ENCODE measurements at regions of chr9 and their contacts with region 1.

Region 1: GRCh38 chr9:101530077-101530711 is 3.5 kb upstream of the RNF20 start:
- DNase-seq: peak; percentile 83
- ATAC-seq: peak; percentile 49
- H3K4me3 ChIP-seq: no peak overlapping the region
- H3K27ac ChIP-seq: no peak overlapping the region
- H3K4me1 ChIP-seq: 0 out of 2 replicates have a peak, but pooled peaks cover 3% of the 10 kb centered on the region
- H3K27me3 ChIP-seq: no peaks in the 10 kb centered on the region
- CTCF ChIP-seq: peak; percentile 74

Region 2: DNA sequence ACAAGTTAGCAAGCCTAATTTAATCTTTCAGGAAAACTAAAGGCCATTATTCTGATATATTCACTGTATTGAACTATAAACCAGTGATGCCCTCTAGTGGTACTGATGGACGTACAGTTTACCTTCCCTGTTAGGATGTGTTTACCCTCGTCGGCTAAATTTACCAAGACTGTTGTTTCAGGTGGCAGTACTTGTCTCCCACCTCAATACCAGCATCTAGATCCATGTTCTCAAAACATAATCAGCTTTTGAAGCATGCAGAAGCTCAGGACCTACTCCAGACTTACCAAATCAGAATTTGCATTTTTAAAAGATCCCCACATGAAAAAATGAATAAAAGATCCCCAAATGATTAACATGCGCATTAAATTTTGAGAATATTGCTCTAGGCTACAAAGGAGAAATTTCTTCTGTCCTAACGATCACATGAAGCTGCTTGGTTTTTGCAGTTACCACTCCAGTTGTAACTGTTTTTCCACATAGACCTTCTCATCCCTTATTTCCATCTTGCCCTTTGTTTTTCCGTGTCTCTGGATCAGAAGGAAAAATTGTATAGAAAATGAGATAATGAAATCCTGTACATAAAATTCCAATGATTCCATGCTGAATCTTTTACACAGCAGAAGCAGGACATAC is 142.2 kb before region 1 on chr9:
- CTCF ChIA-PET with region 1: no interaction called
- POLR2A ChIA-PET with region 1: no interaction called
- intact Hi-C with region 1: loop called (anchors 1 kb)
- DNase-seq: peak; percentile 51
- ATAC-seq: no peak; the same call in 1 of the 2 replicates
- H3K4me3 ChIP-seq: no peak overlapping the region
- H3K27ac ChIP-seq: no peak overlapping the region
- H3K4me1 ChIP-seq: no peaks in the 10 kb centered on the region
- H3K27me3 ChIP-seq: no peaks in the 10 kb centered on the region
- CTCF ChIP-seq: peak; percentile 64

Region 3: GRCh38 chr9:101449140-101449721 is 81.0 kb before region 1 on chr9:
- CTCF ChIA-PET with region 1: interaction called, 8 read pairs
- POLR2A ChIA-PET with region 1: no interaction called
- intact Hi-C with region 1: loop called (anchors 1 kb)
- DNase-seq: peak; percentile 66
- ATAC-seq: peak; percentile 97
- H3K4me3 ChIP-seq: peak overlapping the region; percentile 73
- H3K27ac ChIP-seq: no peak overlapping the region
- H3K4me1 ChIP-seq: no peaks in the 10 kb centered on the region
- H3K27me3 ChIP-seq: no peaks in the 10 kb centered on the region
- CTCF ChIP-seq: peak; percentile 64

Region 4: DNA sequence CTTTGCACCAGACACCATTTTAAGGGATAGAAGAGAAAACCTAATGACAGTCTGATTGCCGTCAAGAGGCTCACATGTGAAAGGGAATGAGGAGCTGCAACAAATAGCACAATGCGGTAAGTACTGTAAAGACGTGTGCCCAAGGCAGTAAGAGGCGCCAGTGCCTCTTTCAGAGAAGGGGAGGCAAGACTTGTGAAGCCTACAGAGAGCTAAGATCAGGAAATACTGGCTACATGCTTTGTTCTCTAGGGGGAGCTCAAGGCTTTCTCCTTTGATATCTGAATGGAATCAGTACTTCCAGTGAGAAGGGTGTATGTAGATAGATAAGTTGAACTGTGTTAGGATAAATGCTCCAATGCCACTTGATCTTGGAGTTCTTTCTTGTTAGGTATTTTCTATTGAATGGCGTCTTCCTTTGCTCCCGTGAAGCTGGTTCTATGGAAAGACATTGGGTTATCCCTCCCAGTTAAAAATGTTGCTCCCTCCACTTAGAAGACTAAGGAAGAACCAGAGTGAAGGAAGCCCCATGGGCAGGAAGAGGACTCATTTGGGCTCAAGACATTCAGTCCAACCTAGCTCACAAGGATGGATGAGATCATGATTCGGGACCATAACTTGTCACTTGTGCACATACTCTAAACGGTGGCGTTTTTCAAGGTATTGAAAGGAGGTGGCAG is 71.1 kb before region 1 on chr9:
- CTCF ChIA-PET with region 1: interaction called, 14 read pairs
- POLR2A ChIA-PET with region 1: no interaction called
- intact Hi-C with region 1: loop called (anchors 1 kb)
- DNase-seq: peak; percentile 71
- ATAC-seq: peak; percentile 89
- H3K4me3 ChIP-seq: no peak overlapping the region
- H3K27ac ChIP-seq: no peak overlapping the region
- H3K4me1 ChIP-seq: no peaks in the 10 kb centered on the region
- H3K27me3 ChIP-seq: no peaks in the 10 kb centered on the region
- CTCF ChIP-seq: peak; percentile 72

Region 5: DNA sequence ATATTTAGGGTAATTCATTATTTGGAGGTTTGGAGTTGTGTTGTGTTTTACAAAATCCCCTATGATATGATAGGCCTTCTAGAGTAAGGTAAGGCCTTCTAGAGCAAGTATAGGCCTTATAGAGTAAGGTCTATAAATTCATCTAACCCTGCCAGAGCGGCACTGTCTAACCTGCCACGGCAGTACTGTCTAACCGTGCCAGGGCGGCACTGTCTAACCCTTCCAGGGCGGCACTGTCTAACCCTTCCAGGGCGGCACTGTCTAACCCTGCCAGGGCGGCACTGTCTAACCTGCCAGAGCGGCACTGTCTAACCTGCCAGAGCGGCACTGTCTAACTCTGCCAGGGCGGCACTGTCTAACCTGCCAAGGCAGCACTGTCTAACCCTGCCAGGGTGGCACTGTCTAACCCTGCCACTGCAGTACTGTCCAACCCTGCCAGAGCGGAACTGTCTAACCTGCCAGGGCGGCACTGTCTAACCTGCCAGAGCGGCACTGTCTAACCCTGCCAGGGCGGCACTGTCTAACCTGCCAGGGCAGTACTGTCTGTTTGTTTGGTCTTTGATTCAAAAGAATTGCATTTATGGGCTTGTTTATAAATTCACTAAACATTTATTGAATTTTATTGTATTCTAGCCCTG is 13.0 kb after region 1 on chr9:
- CTCF ChIA-PET with region 1: no interaction called
- POLR2A ChIA-PET with region 1: no interaction called
- intact Hi-C with region 1: no loop called
- DNase-seq: no peak
- ATAC-seq: no peak
- H3K4me3 ChIP-seq: no peak overlapping the region
- H3K27ac ChIP-seq: no peak overlapping the region
- H3K4me1 ChIP-seq: no peaks in the 10 kb centered on the region
- H3K27me3 ChIP-seq: no peaks in the 10 kb centered on the region
- CTCF ChIP-seq: no peak

Measured in PC-3 (cell line).